ENCODE measurements at regions of chr6 and their contacts with region 1.

Region 1: GRCh38 chr6:130969791-130970491 is 93.1 kb downstream of the EPB41L2 start:
- DNase-seq: peak; percentile 54
- ATAC-seq: peak; percentile 81

Region 2: GRCh38 chr6:130900913-130901312 is 69.0 kb before region 1 on chr6:
- intact Hi-C with region 1: loop called (anchors 5 kb)
- DNase-seq: peak; percentile 64
- ATAC-seq: peak; percentile 64

Measured in Right ventricle myocardium superior (tissue), 1 donor.